GM12878 (cell line): ENCODE measurements at regions of chr7 and their contacts with region 1.

Region 1: DNA sequence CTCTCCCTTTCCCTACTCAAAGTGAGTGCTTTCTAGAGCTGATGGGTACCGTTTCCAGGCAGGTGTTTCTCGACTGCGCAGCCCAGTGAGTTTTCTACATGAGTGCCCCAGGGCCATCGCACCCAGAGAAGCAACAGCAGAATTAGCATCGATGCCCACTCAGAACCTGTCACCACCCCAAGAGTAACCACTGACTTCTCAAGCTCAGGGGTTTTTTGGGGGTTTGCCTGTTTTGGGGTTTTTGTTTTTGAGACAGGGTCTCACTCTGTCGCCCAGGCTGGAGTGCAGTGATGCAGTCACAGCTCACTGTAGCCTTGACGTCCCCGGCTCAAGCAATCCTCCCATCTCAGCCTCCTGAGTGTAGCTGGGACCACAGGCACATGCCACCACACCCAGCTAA is 25.7 kb downstream of the SNX8 start:
- DNase-seq: no peak
- ATAC-seq: peak; percentile 95
- H3K4me3 ChIP-seq: no peak overlapping the region
- H3K27ac ChIP-seq: peak overlapping the region; percentile 70
- H3K4me1 ChIP-seq: peaks cover 18% of the 10 kb centered on the region
- H3K27me3 ChIP-seq: no peaks in the 10 kb centered on the region
- CTCF ChIP-seq: no peak
- EP300 ChIP-seq: peak in 1 of 2 experiments; percentile 39; a peak in 1 of 4 replicates
- POLR2A ChIP-seq: no peak
- RAD21 ChIP-seq: no peak

Region 2: GRCh38 chr7:2258661-2259365 is 29.7 kb before region 1 on chr7:
- CTCF ChIA-PET with region 1: interaction called, 8 read pairs
- POLR2A ChIA-PET with region 1: interaction called, 3 read pairs
- RAD21 ChIA-PET with region 1: interaction called, 11 read pairs
- SMC1A ChIA-PET with region 1: interaction called, 5 read pairs
- in situ Hi-C with region 1: no loop called
- intact Hi-C with region 1: no loop called
- DNase-seq: peak; percentile 50
- ATAC-seq: peak; percentile 92
- H3K4me3 ChIP-seq: no peak overlapping the region
- H3K27ac ChIP-seq: peak overlapping the region; percentile 65
- H3K4me1 ChIP-seq: peaks cover 45% of the 10 kb centered on the region
- H3K27me3 ChIP-seq: no peaks in the 10 kb centered on the region
- CTCF ChIP-seq: no peak
- EP300 ChIP-seq: peak; percentile 46 to 48; a peak in 1 of 4 replicates
- POLR2A ChIP-seq: no peak
- RAD21 ChIP-seq: no peak